BJ (cell line): ENCODE measurements at regions of chr9 and their contacts with region 1.

Region 1: GRCh38 chr9:70120834-70121510 is 77.3 kb downstream of the MAMDC2 start:
- DNase-seq: peak; percentile 80
- H3K4me3 ChIP-seq: no peak overlapping the region
- H3K27me3 ChIP-seq: no peaks in the 10 kb centered on the region
- CTCF ChIP-seq: peak; percentile 53

Region 2: DNA sequence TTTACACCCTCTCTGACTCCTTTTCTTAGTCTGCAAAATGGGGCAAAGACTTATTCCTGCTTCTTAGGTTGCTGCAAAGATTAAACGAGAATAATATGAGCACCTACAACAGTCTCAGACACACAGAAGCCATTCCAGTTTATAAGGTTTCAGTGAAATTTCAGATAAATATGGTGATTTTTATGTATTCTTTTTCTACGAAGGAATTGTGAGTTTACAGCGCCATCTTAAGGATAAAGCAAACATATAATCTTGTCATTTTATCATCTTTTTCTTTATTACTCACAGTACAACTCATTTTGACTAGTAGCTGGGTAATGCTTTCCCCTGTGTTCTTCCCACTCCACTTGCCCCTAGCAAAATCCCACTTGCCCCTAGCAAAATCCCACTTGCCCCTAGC is 108.6 kb after region 1 on chr9:
- CTCF ChIA-PET with region 1: interaction called, 13 read pairs
- POLR2A ChIA-PET with region 1: no interaction called
- DNase-seq: no peak
- H3K4me3 ChIP-seq: no peak overlapping the region
- H3K27me3 ChIP-seq: no peaks in the 10 kb centered on the region
- CTCF ChIP-seq: peak; percentile 42